ENCODE measurements at regions of chr4 and their contacts with region 1.

Region 1: DNA sequence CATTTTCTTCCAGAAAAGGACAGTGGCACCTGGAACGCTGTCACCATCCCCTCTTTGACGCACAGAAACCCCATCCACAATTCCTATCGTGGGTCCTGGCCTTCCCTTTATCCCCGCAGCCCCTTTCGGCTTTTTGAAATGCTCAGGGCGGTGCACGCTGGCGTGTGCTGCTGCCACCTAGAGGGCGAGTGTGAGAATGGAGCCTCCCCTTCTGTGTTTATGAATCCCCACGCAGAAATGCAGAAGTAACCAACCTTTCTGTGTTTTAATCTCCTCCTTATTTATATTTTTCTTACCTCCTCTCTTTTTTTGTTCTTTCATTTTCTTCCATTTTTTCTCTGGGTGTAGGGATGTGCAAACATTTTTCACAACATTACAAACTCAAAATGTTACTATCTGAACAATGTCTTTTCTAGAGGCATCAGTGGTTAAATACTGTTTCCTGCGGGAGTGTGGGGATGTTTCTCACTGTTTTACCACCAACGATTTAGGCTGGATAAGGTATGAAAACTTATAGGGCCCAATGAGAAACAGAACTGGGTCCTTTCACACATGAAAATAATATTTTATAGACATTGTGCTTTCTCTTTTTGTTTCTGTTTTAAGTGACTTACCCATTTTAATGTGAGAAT is 50.0 kb downstream of the TMA16 start:
- DNase-seq: peak; percentile 70 to 79 (median 74)
- ATAC-seq: peak; percentile 95
- H3K4me3 ChIP-seq: no peak overlapping the region
- H3K27ac ChIP-seq: no peak overlapping the region
- H3K4me1 ChIP-seq: no peaks in the 10 kb centered on the region
- H3K27me3 ChIP-seq: no peaks in the 10 kb centered on the region
- CTCF ChIP-seq: peak; percentile 80 to 95 (median 85)
- EP300 ChIP-seq: no peak
- POLR2A ChIP-seq: no peak
- RAD21 ChIP-seq: peak; percentile 54 to 63

Region 2: GRCh38 chr4:163048447-163048846 is 496.1 kb before region 1 on chr4:
- CTCF ChIA-PET with region 1: no interaction called
- POLR2A ChIA-PET with region 1: no interaction called
- in situ Hi-C with region 1: no loop called
- intact Hi-C with region 1: loop called (anchors 5 kb)
- DNase-seq: peak; percentile 25 to 52 (median 41)
- ATAC-seq: peak; percentile 86
- H3K4me3 ChIP-seq: no peak overlapping the region
- H3K27ac ChIP-seq: no peak overlapping the region
- H3K4me1 ChIP-seq: no peaks in the 10 kb centered on the region
- H3K27me3 ChIP-seq: no peaks in the 10 kb centered on the region
- CTCF ChIP-seq: peak; percentile 57 to 66 (median 64)
- EP300 ChIP-seq: no peak
- POLR2A ChIP-seq: no peak
- RAD21 ChIP-seq: peak; percentile 53 to 69

Region 3: GRCh38 chr4:163587867-163588266 is 43.3 kb after region 1 on chr4:
- CTCF ChIA-PET with region 1: no interaction called
- POLR2A ChIA-PET with region 1: no interaction called
- in situ Hi-C with region 1: no loop called
- intact Hi-C with region 1: no loop called
- DNase-seq: peak in 2 of 4 experiments; percentile 6 to 7
- ATAC-seq: peak; percentile 44; the same call in 1 of the 3 replicates
- H3K4me3 ChIP-seq: no peak overlapping the region
- H3K27ac ChIP-seq: no peak overlapping the region
- H3K4me1 ChIP-seq: no peaks in the 10 kb centered on the region
- H3K27me3 ChIP-seq: no peaks in the 10 kb centered on the region
- CTCF ChIP-seq: peak in 2 of 3 experiments; percentile 18 to 26; a peak in 1 of 6 replicates
- EP300 ChIP-seq: no peak
- POLR2A ChIP-seq: no peak
- RAD21 ChIP-seq: no peak

Measured in K562 (cell line).